ENCODE measurements at regions of chr11 and their contacts with region 1.

Region 1: DNA sequence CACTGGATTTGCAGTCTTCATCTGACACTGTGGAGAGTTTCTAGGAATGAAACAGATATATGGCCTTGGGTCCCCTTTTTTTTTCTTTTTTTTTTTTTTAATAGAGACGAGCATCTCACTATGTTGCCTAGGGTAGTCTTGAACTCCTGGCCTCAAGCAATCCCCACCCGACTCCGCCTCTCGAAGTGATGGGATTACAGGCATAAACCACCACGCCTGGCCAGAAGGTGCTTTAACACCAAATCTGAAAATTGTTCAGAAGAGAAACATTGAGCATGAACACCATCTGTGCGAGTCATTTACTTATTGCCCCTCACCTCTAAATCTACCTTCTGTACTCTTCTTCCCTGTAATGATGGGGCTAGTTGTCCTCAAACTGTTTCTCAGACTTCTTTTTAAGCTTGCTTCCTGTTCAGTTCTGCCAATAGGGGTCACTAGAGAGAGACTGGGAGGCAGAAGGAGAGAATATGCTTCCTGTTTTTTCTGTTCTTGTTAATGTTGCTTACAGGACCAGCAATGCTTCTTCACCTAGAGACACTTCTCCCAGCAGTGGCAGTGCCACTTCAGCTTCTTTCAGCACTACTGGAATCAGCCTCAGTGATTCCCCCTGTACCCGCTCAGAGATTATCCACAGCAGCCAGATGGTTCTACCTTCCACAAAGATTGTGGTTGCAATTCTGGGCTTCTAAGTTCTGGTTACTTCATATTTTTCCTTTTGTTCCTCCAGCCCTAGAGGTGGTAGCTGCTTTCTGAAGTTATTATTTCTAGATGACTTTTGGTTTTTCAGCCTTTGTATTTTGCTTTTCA is 20.8 kb upstream of the ZBED5 start:
- DNase-seq: peak; percentile 31 to 81
- ATAC-seq: peak; percentile 66 to 80; a peak in 5 of 6 replicates
- H3K4me3 ChIP-seq: no peak overlapping the region
- H3K27ac ChIP-seq: peak overlapping the region; percentile 59 to 78
- H3K4me1 ChIP-seq: peaks cover 45% of the 10 kb centered on the region
- CTCF ChIP-seq: peak; percentile 55
- EP300 ChIP-seq: no peak
- POLR2A ChIP-seq: no peak
- RAD21 ChIP-seq: peak; percentile 32 to 48; a peak in 2 of 5 replicates

Region 2: GRCh38 chr11:10893714-10894151 is 15.1 kb after region 1 on chr11:
- CTCF ChIA-PET with region 1: interaction called, 21 read pairs
- POLR2A ChIA-PET with region 1: no interaction called
- DNase-seq: peak; percentile 18 to 90
- ATAC-seq: peak; percentile 90 to 95
- H3K4me3 ChIP-seq: no peak overlapping the region
- H3K27ac ChIP-seq: peak overlapping the region; percentile 76 to 93
- H3K4me1 ChIP-seq: peaks cover 53% of the 10 kb centered on the region
- CTCF ChIP-seq: no peak; the same call in 2 of the 3 replicates
- EP300 ChIP-seq: peak; percentile 76 to 88; a peak in 3 of 5 replicates
- POLR2A ChIP-seq: no peak
- RAD21 ChIP-seq: peak in 1 of 2 experiments; percentile 54; a peak in 2 of 5 replicates

Region 3: DNA sequence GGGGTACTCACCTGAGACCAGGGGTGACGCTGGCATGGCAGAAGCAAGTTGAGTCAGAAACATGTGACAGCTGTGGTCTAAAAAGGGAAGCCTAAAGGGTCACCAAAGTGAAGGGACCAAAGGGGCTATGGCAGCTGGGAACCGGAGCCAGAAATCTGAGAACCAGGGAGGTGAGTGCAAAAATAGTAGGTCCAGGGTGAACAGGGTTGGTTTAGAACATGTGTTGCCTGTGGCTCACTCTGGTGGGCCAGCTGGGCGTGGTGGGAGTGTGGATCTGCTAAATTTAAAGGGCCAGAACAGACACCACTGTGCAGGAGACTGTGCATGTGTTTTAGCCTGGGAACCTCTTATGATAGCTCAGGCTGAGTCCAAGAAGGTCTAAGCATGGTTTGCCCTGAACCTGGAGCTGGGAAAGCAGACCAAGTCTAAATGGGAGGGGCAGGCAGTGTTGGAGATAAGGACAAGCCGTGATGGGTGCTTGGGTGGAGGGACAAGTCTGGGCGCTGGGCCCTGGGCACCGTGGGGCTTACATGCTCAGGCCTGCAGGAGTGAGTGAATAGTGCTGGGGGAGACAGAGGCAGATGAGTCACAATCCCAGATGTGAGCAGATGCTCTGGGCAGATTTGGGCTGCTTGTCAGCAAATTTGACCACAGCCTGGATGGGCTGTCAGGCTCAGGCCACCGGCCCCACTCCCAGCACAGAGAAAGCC is 20.7 kb after region 1 on chr11:
- CTCF ChIA-PET with region 1: interaction called, 21 read pairs
- POLR2A ChIA-PET with region 1: interaction called, 3 read pairs
- DNase-seq: no peak
- ATAC-seq: peak; percentile 67 to 74
- H3K4me3 ChIP-seq: no peak overlapping the region
- H3K27ac ChIP-seq: peak overlapping the region; percentile 87 to 93
- H3K4me1 ChIP-seq: peaks cover 62% of the 10 kb centered on the region
- CTCF ChIP-seq: no peak
- EP300 ChIP-seq: no peak
- POLR2A ChIP-seq: no peak
- RAD21 ChIP-seq: peak in 1 of 2 experiments; percentile 12; a peak in 3 of 5 replicates

Region 4: DNA sequence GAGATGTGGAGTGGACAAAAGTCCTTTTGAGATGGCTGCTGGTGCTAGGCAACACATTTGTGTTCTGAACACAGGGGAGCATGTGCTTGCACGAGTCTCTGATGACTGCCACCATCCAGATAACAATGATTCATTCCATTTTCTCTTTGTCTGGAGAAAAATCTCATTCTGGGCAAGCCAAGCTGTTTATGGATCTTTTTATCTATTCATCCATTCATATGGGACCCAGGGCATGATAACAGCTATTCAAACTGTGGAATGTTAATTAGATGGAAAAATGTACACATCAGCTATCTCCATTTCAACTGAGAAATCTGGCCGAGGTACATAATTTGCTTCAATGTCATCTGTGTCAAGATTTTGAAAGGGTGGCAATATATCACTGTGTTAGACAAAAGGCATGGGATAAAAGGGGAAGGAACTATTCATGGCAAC is 96.7 kb after region 1 on chr11:
- CTCF ChIA-PET with region 1: no interaction called
- POLR2A ChIA-PET with region 1: no interaction called
- DNase-seq: no peak
- ATAC-seq: no peak
- H3K4me3 ChIP-seq: no peak overlapping the region
- H3K27ac ChIP-seq: no peak overlapping the region
- H3K4me1 ChIP-seq: no peaks in the 10 kb centered on the region
- CTCF ChIP-seq: no peak
- EP300 ChIP-seq: no peak
- POLR2A ChIP-seq: no peak
- RAD21 ChIP-seq: no peak

Measured in A549 (cell line).